ENCODE measurements at regions of chr17 and their contacts with region 1.

Region 1: GRCh38 chr17:29760761-29761696 is 138.3 kb upstream of the CORO6 start:
- DNase-seq: peak; percentile 87 to 94 (median 91)
- H3K4me3 ChIP-seq: peak overlapping the region; percentile 62
- H3K4me3 Mint-ChIP-seq: peak overlapping the region; percentile 91 to 97 (median 93)
- H3K27ac ChIP-seq: peak overlapping the region; percentile 55
- H3K27ac Mint-ChIP-seq: peak overlapping the region; percentile 78 to 99 (median 95)
- H3K4me1 ChIP-seq: peaks cover 44% of the 10 kb centered on the region
- H3K4me1 Mint-ChIP-seq: peaks cover 34 to 50% (median 36%) of the 10 kb centered on the region in 3 donors
- H3K27me3 ChIP-seq: no peaks in the 10 kb centered on the region
- H3K27me3 Mint-ChIP-seq: no peaks in the 10 kb centered on the region

Region 2: GRCh38 chr17:29645515-29646051 is 115.4 kb before region 1 on chr17:
- CTCF ChIA-PET with region 1: no interaction called
- POLR2A ChIA-PET with region 1: no interaction called
- DNase-seq: no peak
- H3K4me3 ChIP-seq: no peak overlapping the region
- H3K4me3 Mint-ChIP-seq: no peak overlapping the region
- H3K27ac ChIP-seq: no peak overlapping the region
- H3K27ac Mint-ChIP-seq: peak overlapping the region in 5 of 8 donors; percentile 13 to 71 (median 36)
- H3K4me1 ChIP-seq: no peaks in the 10 kb centered on the region
- H3K4me1 Mint-ChIP-seq: peaks cover 3 to 10% (median 4%) of the 10 kb centered on the region in 3 donors
- H3K27me3 ChIP-seq: no peaks in the 10 kb centered on the region
- H3K27me3 Mint-ChIP-seq: no peaks in the 10 kb centered on the region

Region 3: DNA sequence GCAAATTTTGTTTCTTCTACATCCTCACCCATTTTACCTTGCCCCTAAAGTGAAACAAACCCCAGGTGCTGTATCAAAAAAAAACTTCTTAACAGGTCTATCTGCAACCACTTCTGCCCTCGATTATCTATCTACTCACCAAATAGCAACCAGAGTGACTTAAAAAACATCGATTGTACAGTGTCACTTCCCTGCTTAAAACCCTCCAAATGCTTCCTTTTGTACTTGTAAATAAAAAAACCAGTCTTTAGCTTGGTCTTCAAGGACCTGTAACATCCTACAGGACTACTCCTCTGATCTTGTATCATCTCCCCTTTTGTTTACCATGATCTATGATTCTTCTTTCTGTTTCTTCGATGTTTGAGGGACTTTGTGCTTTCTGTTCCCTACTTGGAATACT is 55.6 kb before region 1 on chr17:
- CTCF ChIA-PET with region 1: interaction called, 5 read pairs
- POLR2A ChIA-PET with region 1: interaction called, 29 read pairs
- DNase-seq: peak in 2 of 5 donors; percentile 27 to 40
- H3K4me3 ChIP-seq: peak overlapping the region; percentile 8
- H3K4me3 Mint-ChIP-seq: peak overlapping the region; percentile 14 to 93 (median 68)
- H3K27ac ChIP-seq: peak overlapping the region; percentile 18
- H3K27ac Mint-ChIP-seq: peak overlapping the region; percentile 64 to 100 (median 96)
- H3K4me1 ChIP-seq: peaks cover 46% of the 10 kb centered on the region
- H3K4me1 Mint-ChIP-seq: peaks cover 51 to 69% (median 64%) of the 10 kb centered on the region in 3 donors
- H3K27me3 ChIP-seq: no peaks in the 10 kb centered on the region
- H3K27me3 Mint-ChIP-seq: no peaks in the 10 kb centered on the region

Region 4: GRCh38 chr17:29722411-29723198 is 38.4 kb before region 1 on chr17:
- CTCF ChIA-PET with region 1: interaction called, 5 read pairs
- POLR2A ChIA-PET with region 1: interaction called, 14 read pairs
- DNase-seq: peak; percentile 5 to 68 (median 53)
- H3K4me3 ChIP-seq: peak overlapping the region; percentile 32
- H3K4me3 Mint-ChIP-seq: peak overlapping the region; percentile 53 to 79 (median 70)
- H3K27ac ChIP-seq: peak overlapping the region; percentile 49
- H3K27ac Mint-ChIP-seq: peak overlapping the region; percentile 72 to 96 (median 88)
- H3K4me1 ChIP-seq: peaks cover 77% of the 10 kb centered on the region
- H3K4me1 Mint-ChIP-seq: peaks cover 76 to 92% (median 91%) of the 10 kb centered on the region in 3 donors
- H3K27me3 ChIP-seq: no peaks in the 10 kb centered on the region
- H3K27me3 Mint-ChIP-seq: no peaks in the 10 kb centered on the region

Region 5: GRCh38 chr17:29918922-29919856 is 158.2 kb after region 1 on chr17:
- CTCF ChIA-PET with region 1: no interaction called
- POLR2A ChIA-PET with region 1: no interaction called
- DNase-seq: no peak
- H3K4me3 ChIP-seq: no peak overlapping the region
- H3K4me3 Mint-ChIP-seq: no peak overlapping the region
- H3K27ac ChIP-seq: no peak overlapping the region
- H3K27ac Mint-ChIP-seq: peak overlapping the region in 2 of 8 donors; percentile 14 to 61
- H3K4me1 ChIP-seq: no peaks in the 10 kb centered on the region
- H3K4me1 Mint-ChIP-seq: peaks cover 21 to 40% (median 38%) of the 10 kb centered on the region in 3 donors
- H3K27me3 ChIP-seq: no peaks in the 10 kb centered on the region
- H3K27me3 Mint-ChIP-seq: no peaks in the 10 kb centered on the region

Measured in CD8-positive, alpha-beta memory T cell (primary cell).